Activated CD4-positive, alpha-beta T cell treated with anti-CD3 and anti-CD28 coated beads, Interleukin-2, amount 10 ng/mL, durations not matched to agents 7 days and 5 days (primary cell): ENCODE measurements at regions of chr5 and their contacts with region 1.

Region 1: GRCh38 chr5:119315516-119315949 is 40.3 kb upstream of the TNFAIP8 start:
- DNase-seq: peak; percentile 65
- H3K4me3 Mint-ChIP-seq: peak overlapping the region; percentile 28
- H3K27ac Mint-ChIP-seq: peak overlapping the region; percentile 85
- H3K4me1 Mint-ChIP-seq: peaks cover 91% of the 10 kb centered on the region
- H3K27me3 Mint-ChIP-seq: no peaks in the 10 kb centered on the region

Region 2: GRCh38 chr5:119274767-119275130 is 40.8 kb before region 1 on chr5:
- CTCF ChIA-PET with region 1: interaction called, 26 read pairs
- POLR2A ChIA-PET with region 1: no interaction called
- DNase-seq: no peak
- H3K4me3 Mint-ChIP-seq: peak overlapping the region; percentile 99
- H3K27ac Mint-ChIP-seq: peak overlapping the region; percentile 90
- H3K4me1 Mint-ChIP-seq: peaks cover 87% of the 10 kb centered on the region
- H3K27me3 Mint-ChIP-seq: no peaks in the 10 kb centered on the region

Region 3: DNA sequence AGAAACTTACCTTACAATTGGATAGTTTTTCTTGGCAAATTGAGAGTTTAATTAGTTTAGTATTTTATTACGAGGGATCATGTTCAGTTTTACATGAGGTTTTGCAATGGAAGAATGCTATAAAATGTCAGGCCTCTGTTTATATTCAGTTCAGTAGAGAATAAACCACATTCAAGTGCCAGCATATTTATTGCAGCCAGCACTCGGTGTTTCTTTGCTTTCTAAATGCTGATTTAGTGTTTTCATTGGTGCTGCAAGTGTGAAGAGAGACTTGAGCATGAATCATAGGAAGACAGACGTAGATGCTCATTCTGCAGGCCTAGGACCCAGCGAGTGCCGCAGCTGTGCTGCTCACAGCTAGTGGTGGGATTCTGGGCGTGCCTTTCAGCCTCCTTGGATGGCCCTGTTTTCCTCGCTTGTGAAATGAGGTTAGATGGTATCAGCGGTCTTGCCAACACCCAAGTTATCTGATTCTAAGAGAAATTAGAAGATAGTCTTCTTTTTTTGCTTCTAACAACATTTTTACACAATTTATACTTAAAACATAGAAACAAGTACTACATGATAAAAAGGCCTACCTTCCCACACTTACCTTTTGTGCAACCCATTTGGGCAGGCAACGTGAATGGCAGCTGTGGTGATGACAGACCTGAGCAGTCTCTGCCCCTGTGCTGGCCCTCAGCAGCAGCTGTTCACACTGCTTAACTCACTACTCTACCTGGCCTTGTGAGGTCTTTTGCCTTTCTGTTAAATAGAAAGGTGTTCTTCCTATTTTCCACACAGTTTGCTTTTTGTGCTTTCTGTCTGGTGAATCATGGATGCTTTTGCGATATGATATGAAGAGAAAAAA is 13.4 kb after region 1 on chr5:
- CTCF ChIA-PET with region 1: interaction called, 13 read pairs
- POLR2A ChIA-PET with region 1: no interaction called
- DNase-seq: peak; percentile 59
- H3K4me3 Mint-ChIP-seq: peak overlapping the region; percentile 30
- H3K27ac Mint-ChIP-seq: peak overlapping the region; percentile 94
- H3K4me1 Mint-ChIP-seq: peaks cover 81% of the 10 kb centered on the region
- H3K27me3 Mint-ChIP-seq: no peaks in the 10 kb centered on the region

Region 4: DNA sequence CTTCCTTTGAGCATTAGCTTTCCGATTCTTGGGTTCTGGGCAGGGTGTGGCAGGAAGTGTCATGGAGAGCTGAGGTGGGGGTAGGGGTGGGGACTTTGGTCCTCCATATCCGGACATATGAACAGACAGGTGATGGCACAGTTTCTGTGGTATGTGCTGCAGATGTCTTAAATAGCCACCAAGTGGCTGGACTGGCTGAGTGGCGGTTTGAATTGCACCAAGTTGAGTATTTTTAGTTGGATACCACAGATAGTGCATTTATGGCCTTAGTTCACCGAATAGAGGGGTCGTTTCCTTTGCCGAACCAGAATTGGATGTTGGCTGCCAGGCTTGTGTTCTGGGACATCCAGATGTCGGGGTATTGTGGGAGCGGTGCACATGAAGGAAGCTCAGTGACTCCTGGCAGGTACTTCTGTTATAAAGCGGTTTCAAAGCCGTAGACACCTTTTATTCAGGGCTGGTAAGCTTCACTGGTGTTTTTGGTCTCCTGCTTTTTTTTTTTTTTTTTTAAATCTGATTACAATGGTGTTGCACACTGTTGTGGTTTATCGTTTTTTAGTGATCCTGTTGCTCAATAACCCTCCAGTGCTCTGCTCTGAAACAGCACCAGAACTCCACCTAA is 25.2 kb after region 1 on chr5:
- CTCF ChIA-PET with region 1: interaction called, 14 read pairs
- POLR2A ChIA-PET with region 1: interaction called, 3 read pairs
- DNase-seq: peak; percentile 83
- H3K4me3 Mint-ChIP-seq: peak overlapping the region; percentile 84
- H3K27ac Mint-ChIP-seq: peak overlapping the region; percentile 91
- H3K4me1 Mint-ChIP-seq: peaks cover 91% of the 10 kb centered on the region
- H3K27me3 Mint-ChIP-seq: no peaks in the 10 kb centered on the region

Region 5: DNA sequence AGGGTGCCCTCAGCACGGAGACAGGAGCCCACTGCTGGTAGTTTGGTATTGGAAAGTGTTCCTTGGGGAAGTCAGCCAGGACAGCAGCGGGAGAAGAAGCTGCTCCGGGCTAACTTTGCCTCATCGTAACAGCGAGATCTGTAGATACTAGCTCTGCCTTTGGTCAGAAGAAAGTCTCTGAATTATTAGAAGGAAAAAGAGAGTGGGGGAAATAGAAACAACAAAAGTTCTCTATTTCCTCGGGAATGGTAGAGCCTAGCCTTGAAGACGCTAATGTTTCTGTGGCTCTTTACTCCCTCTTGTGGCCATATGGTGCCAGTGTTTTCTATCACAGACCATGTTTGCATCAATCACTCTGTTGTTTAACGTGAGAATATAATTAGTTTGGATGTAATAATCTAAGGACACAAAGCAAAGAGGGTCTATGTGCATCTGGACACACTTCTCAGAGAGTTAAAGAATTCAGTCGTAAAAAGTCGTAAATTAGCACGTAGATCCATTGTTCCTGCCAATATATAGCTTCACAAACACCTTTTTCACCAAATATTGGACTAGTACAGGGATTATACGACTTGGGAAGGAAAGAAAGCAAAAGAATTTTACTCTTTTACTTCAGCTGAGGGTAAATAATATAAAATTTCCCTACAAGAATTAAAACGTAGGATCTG is 96.5 kb after region 1 on chr5:
- CTCF ChIA-PET with region 1: interaction called, 17 read pairs
- POLR2A ChIA-PET with region 1: no interaction called
- DNase-seq: peak; percentile 66
- H3K4me3 Mint-ChIP-seq: peak overlapping the region; percentile 67
- H3K27ac Mint-ChIP-seq: no peak overlapping the region
- H3K4me1 Mint-ChIP-seq: peaks cover 33% of the 10 kb centered on the region
- H3K27me3 Mint-ChIP-seq: peaks cover 9% of the 10 kb centered on the region